WTC11 (cell line): ENCODE measurements at regions of chr16 and their contacts with region 1.

Region 1: GRCh38 chr16:3099732-3100499 is 822 bp upstream of the ZSCAN10 start:
- DNase-seq: peak; percentile 95
- ATAC-seq: peak; percentile 42
- H3K4me3 Mint-ChIP-seq: peak overlapping the region; percentile 93
- H3K27ac Mint-ChIP-seq: peak overlapping the region; percentile 99
- H3K4me1 Mint-ChIP-seq: peaks cover 61% of the 10 kb centered on the region
- H3K27me3 Mint-ChIP-seq: no peaks in the 10 kb centered on the region; the same call in 1 of the 2 replicates
- CTCF ChIP-seq: no peak

Region 2: DNA sequence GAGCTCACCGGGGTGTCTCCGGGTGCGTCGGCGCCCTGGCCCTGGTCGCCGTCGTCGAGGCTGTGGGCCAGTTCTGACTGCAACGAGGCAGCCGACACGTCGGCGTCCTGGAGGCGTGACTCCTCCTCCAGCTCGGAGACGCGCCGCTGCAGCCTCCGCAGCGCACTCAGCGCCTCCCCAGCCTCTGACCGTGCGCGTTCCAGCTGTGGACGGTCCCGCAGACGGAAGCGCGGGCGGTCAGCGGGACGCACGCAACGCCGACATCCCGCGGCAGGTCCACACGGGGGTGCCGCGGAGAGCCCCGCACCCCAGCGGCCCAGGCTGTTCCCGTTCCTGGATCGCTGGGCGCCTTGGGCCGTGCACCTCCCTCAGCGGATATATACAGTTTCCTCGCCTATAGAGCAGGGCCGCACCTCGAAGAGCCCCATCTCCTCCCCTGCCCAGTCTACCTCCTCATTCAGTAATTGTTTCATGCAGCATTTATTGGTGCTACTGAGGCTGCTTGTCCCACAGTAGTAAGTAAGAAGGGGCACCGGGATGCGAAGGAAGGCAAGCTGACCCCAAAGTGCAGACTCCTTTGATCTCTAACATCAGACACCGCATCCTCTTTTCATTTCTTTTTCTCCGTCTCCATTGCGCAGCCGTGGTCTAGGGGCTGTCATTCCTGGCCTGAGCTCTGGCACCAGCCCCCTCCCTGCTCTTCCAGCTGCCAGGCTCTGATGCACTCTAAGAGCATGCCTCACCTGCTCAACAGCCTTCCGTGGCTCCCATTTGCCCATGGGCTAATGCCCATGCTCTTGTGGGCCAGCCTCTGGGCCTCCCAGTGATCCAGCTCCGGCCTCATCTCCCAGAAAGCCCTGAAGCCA is 70.1 kb before region 1 on chr16:
- CTCF ChIA-PET with region 1: interaction called, 24 read pairs
- POLR2A ChIA-PET with region 1: interaction called, 8 read pairs
- DNase-seq: no peak
- ATAC-seq: no peak
- H3K4me3 Mint-ChIP-seq: no peak overlapping the region
- H3K27ac Mint-ChIP-seq: no peak overlapping the region
- H3K4me1 Mint-ChIP-seq: peaks cover 22% of the 10 kb centered on the region
- H3K27me3 Mint-ChIP-seq: no peaks in the 10 kb centered on the region
- CTCF ChIP-seq: no peak

Region 3: GRCh38 chr16:3087243-3088235 is 12.4 kb before region 1 on chr16:
- CTCF ChIA-PET with region 1: interaction called, 13 read pairs
- POLR2A ChIA-PET with region 1: interaction called, 12 read pairs
- DNase-seq: peak; percentile 50
- ATAC-seq: peak; percentile 49
- H3K4me3 Mint-ChIP-seq: no peak overlapping the region
- H3K27ac Mint-ChIP-seq: peak overlapping the region; percentile 84
- H3K4me1 Mint-ChIP-seq: peaks cover 21% of the 10 kb centered on the region
- H3K27me3 Mint-ChIP-seq: no peaks in the 10 kb centered on the region
- CTCF ChIP-seq: no peak

Region 4: DNA sequence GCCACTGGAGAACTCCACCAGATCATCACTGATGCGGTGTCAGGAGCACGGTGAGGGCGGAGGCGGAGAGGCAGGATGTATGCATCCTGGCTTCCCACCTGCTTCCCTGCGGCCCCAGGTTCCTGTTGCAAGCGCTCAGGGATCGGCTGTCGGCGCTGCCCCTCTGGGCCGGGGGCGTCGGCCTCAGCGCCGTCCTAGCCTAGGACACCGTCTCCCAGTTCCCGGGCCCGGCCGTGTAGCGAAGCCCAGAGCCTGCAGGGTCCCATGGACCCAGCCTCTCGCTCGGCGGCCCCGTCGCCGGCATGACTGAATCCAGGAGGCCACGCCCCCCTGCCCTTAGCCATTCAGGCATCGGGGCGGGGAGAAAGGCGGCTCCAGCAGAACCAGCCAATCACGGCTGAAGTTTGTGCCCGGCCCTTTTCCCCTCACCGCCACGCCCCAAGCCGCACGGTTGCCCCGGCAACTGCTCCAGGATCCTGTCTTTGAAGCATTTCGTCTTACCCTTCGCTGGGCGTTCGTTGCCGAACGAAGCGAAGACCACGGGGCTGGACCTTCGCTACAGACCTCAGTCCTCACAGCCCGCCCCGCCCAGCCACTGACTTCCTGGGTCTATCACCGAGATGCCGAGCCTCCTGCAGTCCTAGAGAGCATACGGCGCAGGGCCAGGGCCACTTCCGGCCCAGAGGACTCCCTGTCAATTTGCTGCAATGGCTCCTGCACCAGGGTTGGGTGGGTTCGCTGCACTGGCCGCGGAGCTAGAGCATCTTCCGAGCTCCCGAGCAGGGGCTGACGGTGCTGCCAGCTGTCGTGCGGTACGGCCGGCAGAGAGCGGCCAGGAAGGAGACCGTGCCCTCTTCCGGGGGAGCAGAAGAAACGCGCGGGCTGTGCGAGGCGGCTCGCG is 24.3 kb after region 1 on chr16:
- CTCF ChIA-PET with region 1: interaction called, 60 read pairs
- POLR2A ChIA-PET with region 1: interaction called, 8 read pairs
- DNase-seq: peak; percentile 99
- ATAC-seq: peak; percentile 89
- H3K4me3 Mint-ChIP-seq: peak overlapping the region; percentile 88
- H3K27ac Mint-ChIP-seq: peak overlapping the region; percentile 96
- H3K4me1 Mint-ChIP-seq: peaks cover 37% of the 10 kb centered on the region
- H3K27me3 Mint-ChIP-seq: no peaks in the 10 kb centered on the region
- CTCF ChIP-seq: no peak

Region 5: GRCh38 chr16:3150346-3151218 is 50.7 kb after region 1 on chr16:
- CTCF ChIA-PET with region 1: interaction called, 10 read pairs
- POLR2A ChIA-PET with region 1: interaction called, 5 read pairs
- DNase-seq: peak; percentile 98
- ATAC-seq: peak; percentile 78
- H3K4me3 Mint-ChIP-seq: peak overlapping the region; percentile 93
- H3K27ac Mint-ChIP-seq: peak overlapping the region; percentile 96
- H3K4me1 Mint-ChIP-seq: peaks cover 7% of the 10 kb centered on the region
- H3K27me3 Mint-ChIP-seq: peaks cover 37% of the 10 kb centered on the region
- CTCF ChIP-seq: no peak